ENCODE measurements at regions of chr6 and their contacts with region 1.

Region 1: DNA sequence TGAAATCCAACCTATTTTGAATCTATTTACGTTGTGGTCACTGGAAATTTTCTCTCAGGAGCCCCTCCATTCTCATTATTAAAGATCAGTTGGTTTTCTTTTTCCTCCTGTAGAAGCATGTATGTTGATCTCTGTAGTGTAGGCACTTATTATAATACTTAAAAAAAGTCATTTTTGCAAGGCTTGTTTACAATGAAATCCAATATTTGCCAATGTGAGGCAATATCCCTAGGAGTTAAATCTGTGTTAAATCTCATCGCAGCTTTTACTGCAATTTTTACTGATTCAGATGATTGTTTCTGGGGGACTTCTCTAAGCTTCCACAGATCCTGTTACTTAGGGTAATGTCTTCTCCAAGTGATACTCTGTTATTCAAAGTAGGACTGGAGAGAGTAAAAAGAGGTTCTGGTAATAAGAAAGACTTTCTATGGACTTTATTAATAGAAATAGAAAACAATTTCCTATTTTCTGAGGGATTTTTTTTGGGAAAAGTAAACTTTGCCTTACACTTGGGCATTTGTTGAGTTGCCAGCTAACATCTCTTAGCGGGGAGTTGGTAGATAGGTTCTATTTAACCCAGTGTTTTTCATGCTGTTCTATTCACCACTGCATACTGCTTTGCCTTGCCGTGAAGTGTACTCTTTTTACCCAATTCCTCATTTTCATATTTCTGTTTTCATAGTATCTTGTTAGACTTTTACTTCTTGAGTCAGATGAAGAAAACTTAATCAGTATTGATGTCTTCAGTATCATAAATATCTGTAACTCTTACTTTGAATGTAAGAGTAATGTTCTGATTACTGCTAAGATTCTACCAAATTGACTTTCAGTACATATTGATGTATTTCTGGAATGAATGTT is 48.6 kb downstream of the CDKAL1 start:
- DNase-seq: no peak
- H3K4me3 Mint-ChIP-seq: no peak overlapping the region
- H3K27ac Mint-ChIP-seq: no peak overlapping the region
- H3K4me1 Mint-ChIP-seq: peaks cover 11% of the 10 kb centered on the region
- H3K27me3 Mint-ChIP-seq: no peaks in the 10 kb centered on the region

Region 2: GRCh38 chr6:20542927-20543602 is 39.8 kb before region 1 on chr6:
- intact Hi-C with region 1: loop called (anchors 1 kb)
- DNase-seq: peak; percentile 82
- H3K4me3 Mint-ChIP-seq: peak overlapping the region; percentile 38
- H3K27ac Mint-ChIP-seq: peak overlapping the region; percentile 88
- H3K4me1 Mint-ChIP-seq: peaks cover 43% of the 10 kb centered on the region
- H3K27me3 Mint-ChIP-seq: no peaks in the 10 kb centered on the region

Region 3: DNA sequence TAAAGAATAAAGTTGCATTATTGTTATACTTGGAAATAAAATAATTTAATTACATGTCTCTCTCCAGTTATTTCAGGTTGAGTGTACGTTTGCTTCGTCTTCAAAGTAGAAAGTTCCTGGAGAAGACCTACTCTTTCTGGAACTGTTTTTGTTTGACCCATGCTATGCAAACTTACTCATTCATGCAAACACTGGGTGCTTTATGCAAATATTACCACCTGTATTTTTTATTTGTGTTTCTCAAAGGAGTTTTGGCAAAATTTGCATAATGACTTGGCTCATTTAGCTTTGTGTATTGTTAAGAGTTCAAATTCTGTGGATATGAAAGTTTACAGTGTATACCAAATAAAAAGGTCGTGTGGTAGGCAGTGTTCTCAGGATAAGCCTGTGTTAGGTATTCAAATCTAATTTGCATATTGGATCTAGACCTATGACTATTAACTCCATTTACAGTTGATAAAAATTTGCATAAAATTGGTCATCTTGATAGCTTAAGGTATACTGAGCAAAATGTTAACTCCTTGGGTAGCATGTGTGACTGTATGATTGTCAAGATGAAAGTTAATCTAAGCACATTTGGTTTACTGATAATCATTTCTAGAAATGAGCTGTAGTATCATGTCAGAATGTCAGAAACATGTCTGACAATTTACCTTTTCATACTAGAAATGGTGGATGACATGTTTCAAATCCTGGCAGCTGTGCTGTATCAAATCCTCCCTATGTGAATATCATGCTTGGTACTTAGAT is 16.7 kb after region 1 on chr6:
- intact Hi-C with region 1: loop called (anchors 1 kb)
- DNase-seq: no peak
- H3K4me3 Mint-ChIP-seq: no peak overlapping the region
- H3K27ac Mint-ChIP-seq: peak overlapping the region; percentile 62
- H3K4me1 Mint-ChIP-seq: peaks cover 7% of the 10 kb centered on the region
- H3K27me3 Mint-ChIP-seq: no peaks in the 10 kb centered on the region

Region 4: GRCh38 chr6:20610636-20611370 is 28.0 kb after region 1 on chr6:
- intact Hi-C with region 1: no loop called
- DNase-seq: no peak
- H3K4me3 Mint-ChIP-seq: no peak overlapping the region
- H3K27ac Mint-ChIP-seq: no peak overlapping the region
- H3K4me1 Mint-ChIP-seq: peaks cover 8% of the 10 kb centered on the region
- H3K27me3 Mint-ChIP-seq: no peaks in the 10 kb centered on the region